AG04450 (cell line): ENCODE measurements at regions of chr6 and their contacts with region 1.

Region 1: GRCh38 chr6:125140808-125141207 is 12.8 kb upstream of the TPD52L1 start:
- DNase-seq: no peak
- H3K4me3 ChIP-seq: no peak overlapping the region
- H3K27ac ChIP-seq: no peak overlapping the region
- H3K27me3 ChIP-seq: no peaks in the 10 kb centered on the region
- CTCF ChIP-seq: no peak

Region 2: GRCh38 chr6:125153391-125154117 is 12.7 kb after region 1 on chr6 and contains the start of gene TPD52L1:
- CTCF ChIA-PET with region 1: interaction called, 12 read pairs
- POLR2A ChIA-PET with region 1: no interaction called
- DNase-seq: no peak
- H3K4me3 ChIP-seq: peak within 1 kb of the TSS; percentile 70
- H3K27ac ChIP-seq: no peak within 1 kb of the TSS
- H3K27me3 ChIP-seq: peaks cover 3% of the 10 kb centered on the region
- CTCF ChIP-seq: peak; percentile 94
- polyA plus RNA-seq, gene TPD52L1: 10.9 and 11.1 TPM in 2 replicates

Region 3: GRCh38 chr6:125170376-125170775 is 29.6 kb after region 1 on chr6:
- CTCF ChIA-PET with region 1: no interaction called
- POLR2A ChIA-PET with region 1: no interaction called
- DNase-seq: no peak
- H3K4me3 ChIP-seq: no peak overlapping the region
- H3K27ac ChIP-seq: no peak overlapping the region
- H3K27me3 ChIP-seq: no peaks in the 10 kb centered on the region
- CTCF ChIP-seq: no peak

Region 4: GRCh38 chr6:125201961-125202591 is 61.3 kb after region 1 on chr6:
- CTCF ChIA-PET with region 1: no interaction called
- POLR2A ChIA-PET with region 1: no interaction called
- DNase-seq: peak; percentile 87
- H3K4me3 ChIP-seq: no peak overlapping the region
- H3K27ac ChIP-seq: peak overlapping the region; percentile 91
- H3K27me3 ChIP-seq: no peaks in the 10 kb centered on the region
- CTCF ChIP-seq: no peak